Right ventricle myocardium superior (tissue), 1 donor: ENCODE measurements at regions of chr7 and their contacts with region 1.

Region 1: DNA sequence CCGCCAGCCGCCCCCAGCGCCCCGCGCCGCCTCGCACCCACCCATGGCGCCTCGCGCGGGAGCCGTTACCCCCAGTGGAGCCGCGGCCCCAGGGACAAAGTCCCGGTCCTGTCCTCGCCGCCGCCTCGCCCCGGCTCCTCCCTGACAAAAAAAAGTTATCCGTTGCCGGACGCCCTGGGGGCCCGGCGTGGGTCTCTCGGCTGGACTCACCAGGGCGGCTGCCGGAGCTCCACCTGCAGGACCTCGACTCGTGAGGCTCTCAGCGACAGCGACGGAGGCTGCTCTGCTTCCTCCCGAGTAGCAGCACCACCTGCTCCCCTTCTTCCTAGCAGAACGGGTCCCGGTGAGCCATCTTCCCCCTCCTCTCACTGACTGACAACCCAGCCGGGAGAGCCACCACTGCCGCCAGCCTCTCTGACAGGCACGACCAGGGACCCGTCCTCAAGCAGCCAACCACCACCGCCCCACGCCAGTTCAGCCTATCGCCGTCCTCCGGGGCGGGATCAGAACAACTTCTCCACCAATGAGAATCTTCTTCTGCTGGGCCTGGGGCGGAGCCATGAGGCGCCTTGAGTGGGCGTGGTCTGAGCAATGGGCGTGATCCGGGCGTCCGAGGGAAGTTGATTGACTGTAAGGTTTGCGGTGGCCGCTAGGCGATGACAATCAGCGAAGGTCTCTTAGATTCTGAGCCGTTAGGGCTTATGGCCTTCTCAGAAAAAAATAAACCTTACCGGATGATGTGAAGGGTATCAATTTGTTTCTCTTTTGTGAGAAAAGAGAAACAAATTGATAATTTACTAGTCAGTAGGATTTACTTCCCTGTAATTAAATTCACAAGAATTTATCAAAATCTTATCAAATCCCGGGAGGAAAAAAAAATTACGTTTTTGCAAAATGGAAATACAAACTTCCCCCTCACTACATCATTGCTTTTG is at the start of gene HYCC1:
- DNase-seq: peak; percentile 99
- ATAC-seq: peak; percentile 99
- total RNA-seq, gene HYCC1: 35.0 TPM

Region 2: GRCh38 chr7:22854158-22855048 is 159.6 kb before region 1 on chr7:
- intact Hi-C with region 1: loop called (anchors 5 kb)
- DNase-seq: peak; percentile 95
- ATAC-seq: peak; percentile 96

Region 3: DNA sequence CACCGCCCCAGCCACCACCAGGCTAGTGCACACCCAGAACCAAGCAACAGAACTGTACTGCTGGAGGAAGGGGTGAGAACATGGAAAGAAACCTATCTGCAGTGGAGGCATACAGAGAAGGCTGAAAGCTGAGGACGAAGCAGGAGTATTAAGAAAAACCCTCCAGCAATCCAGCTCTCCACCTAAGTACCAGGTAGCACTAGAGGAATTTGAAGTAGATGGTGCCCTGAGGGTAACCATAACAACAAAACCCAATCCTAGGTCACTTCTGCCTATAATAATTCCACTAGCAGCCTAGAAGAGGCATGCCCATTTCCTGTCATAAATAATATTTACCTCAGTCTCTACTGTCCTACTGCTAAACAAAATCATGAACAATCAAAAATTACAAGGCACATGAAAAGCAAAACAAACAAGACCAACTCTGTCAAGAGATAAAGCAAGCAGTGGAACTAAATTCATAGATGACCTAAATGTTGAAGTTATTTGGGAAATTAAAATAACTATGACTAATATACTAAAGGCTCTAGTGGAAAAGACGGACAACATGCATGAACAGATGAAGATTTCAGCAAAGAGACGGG is 51.1 kb before region 1 on chr7:
- intact Hi-C with region 1: no loop called
- DNase-seq: no peak
- ATAC-seq: no peak

Region 4: GRCh38 chr7:23369695-23370404 is 355.9 kb after region 1 on chr7:
- intact Hi-C with region 1: no loop called
- DNase-seq: no peak
- ATAC-seq: no peak